ENCODE measurements at regions of chr18 and their contacts with region 1.

Region 1: GRCh38 chr18:59823596-59824195 is 76.1 kb upstream of the PMAIP1 start:
- DNase-seq: peak in 12 of 35 experiments; percentile 1 to 41 (median 5)
- ATAC-seq: no peak
- H3K4me3 ChIP-seq: no peak overlapping the region
- H3K4me3 Mint-ChIP-seq: no peak overlapping the region
- H3K27ac ChIP-seq: no peak overlapping the region
- H3K27ac Mint-ChIP-seq: no peak overlapping the region
- H3K4me1 ChIP-seq: peaks cover 0 to 1% of the 10 kb centered on the region in 2 experiments
- H3K4me1 Mint-ChIP-seq: no peaks in the 10 kb centered on the region
- H3K27me3 ChIP-seq: peaks cover 0 to 5% of the 10 kb centered on the region in 2 experiments
- H3K27me3 Mint-ChIP-seq: peaks cover 8 to 26% of the 10 kb centered on the region in 2 donors

Region 2: DNA sequence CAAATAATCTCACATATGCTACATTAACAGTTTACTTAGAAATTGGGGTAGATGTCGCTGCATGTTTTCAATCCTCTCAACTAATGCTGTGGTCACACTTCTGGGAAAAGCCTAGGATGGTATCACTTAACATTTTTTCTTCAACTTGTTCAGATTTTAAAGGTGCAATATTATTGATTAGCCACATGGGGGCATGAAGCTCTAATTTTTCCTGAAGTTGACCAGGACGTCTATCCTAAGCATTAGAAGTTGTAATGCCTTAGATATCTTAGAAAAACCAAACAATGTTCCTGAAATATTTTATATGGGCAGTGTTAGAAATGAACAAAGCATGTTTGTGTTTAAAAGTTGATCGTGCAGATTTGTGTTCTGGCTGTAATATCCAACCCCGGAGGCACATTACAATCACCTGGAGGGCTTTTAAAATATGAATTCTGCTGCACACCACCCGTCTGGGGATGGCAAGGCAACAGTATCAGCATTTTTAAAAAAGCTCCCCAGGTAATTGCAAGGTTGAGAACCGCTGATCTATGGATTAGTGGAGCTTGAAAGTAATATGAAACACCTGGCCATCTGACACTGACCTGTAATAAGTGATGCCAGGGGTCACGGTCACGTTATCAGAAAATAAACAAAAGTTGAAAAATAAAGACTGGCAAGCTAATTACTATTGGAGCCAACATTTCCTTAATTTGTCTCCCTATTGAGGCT is 364.2 kb before region 1 on chr18:
- CTCF ChIA-PET with region 1: interaction called in 1 of 2 experiments, 12 read pairs
- POLR2A ChIA-PET with region 1: no interaction called
- DNase-seq: peak in 1 of 35 experiments; percentile 6
- ATAC-seq: no peak
- H3K4me3 ChIP-seq: no peak overlapping the region
- H3K4me3 Mint-ChIP-seq: no peak overlapping the region
- H3K27ac ChIP-seq: no peak overlapping the region
- H3K27ac Mint-ChIP-seq: no peak overlapping the region
- H3K4me1 ChIP-seq: no peaks in the 10 kb centered on the region
- H3K4me1 Mint-ChIP-seq: no peaks in the 10 kb centered on the region
- H3K27me3 ChIP-seq: peaks cover 0 to 2% of the 10 kb centered on the region in 2 experiments
- H3K27me3 Mint-ChIP-seq: peaks cover 9% of the 10 kb centered on the region in 2 donors

Region 3: GRCh38 chr18:59725142-59725541 is 98.6 kb before region 1 on chr18:
- CTCF ChIA-PET with region 1: no interaction called
- POLR2A ChIA-PET with region 1: no interaction called
- DNase-seq: no peak
- ATAC-seq: no peak
- H3K4me3 ChIP-seq: no peak overlapping the region
- H3K4me3 Mint-ChIP-seq: no peak overlapping the region
- H3K27ac ChIP-seq: no peak overlapping the region
- H3K27ac Mint-ChIP-seq: no peak overlapping the region
- H3K4me1 ChIP-seq: no peaks in the 10 kb centered on the region
- H3K4me1 Mint-ChIP-seq: no peaks in the 10 kb centered on the region
- H3K27me3 ChIP-seq: no peaks in the 10 kb centered on the region
- H3K27me3 Mint-ChIP-seq: peaks cover 3 to 9% of the 10 kb centered on the region in 2 donors